PC-9 (cell line): ENCODE measurements at regions of chr10 and their contacts with region 1.

Region 1: GRCh38 chr10:3740157-3740871 is 44.7 kb downstream of the KLF6 start:
- DNase-seq: peak in 1 of 2 experiments; percentile 97
- H3K4me3 ChIP-seq: peak overlapping the region; percentile 24; the same call in 1 of the 2 replicates
- H3K27ac ChIP-seq: peak overlapping the region; percentile 96
- H3K4me1 ChIP-seq: peaks cover 40% of the 10 kb centered on the region
- H3K27me3 ChIP-seq: no peaks in the 10 kb centered on the region
- CTCF ChIP-seq: no peak

Region 2: DNA sequence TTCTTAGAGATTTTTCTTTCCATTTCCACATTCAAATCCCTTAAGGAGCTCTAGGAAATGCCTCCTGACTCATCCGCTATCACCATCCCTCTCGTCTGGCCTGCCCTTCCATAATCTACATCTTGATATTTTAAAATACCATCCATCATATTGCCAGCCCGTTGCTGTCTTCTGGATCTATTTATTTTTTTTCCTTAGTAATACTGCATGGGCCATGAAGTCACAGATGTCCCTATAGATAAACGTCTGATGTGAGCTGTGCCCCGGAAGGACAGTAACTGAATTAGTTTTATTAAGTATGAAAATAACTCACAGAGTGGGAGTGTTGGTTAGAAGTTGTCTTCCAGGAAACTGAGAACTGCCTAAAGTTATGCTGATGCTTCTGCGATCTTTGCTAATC is 31.5 kb before region 1 on chr10:
- CTCF ChIA-PET with region 1: no interaction called
- POLR2A ChIA-PET with region 1: interaction called, 11 read pairs
- intact Hi-C with region 1: no loop called
- DNase-seq: no peak
- H3K4me3 ChIP-seq: no peak overlapping the region
- H3K27ac ChIP-seq: no peak overlapping the region
- H3K4me1 ChIP-seq: no peaks in the 10 kb centered on the region
- H3K27me3 ChIP-seq: no peaks in the 10 kb centered on the region
- CTCF ChIP-seq: no peak

Region 3: GRCh38 chr10:3729397-3729976 is 10.8 kb before region 1 on chr10:
- CTCF ChIA-PET with region 1: interaction called, 10 read pairs
- POLR2A ChIA-PET with region 1: no interaction called
- intact Hi-C with region 1: no loop called
- DNase-seq: peak; percentile 39 to 78
- H3K4me3 ChIP-seq: no peak overlapping the region
- H3K27ac ChIP-seq: 0 out of 2 replicates have a peak overlapping the region, but pooled peaks have one; percentile 1
- H3K4me1 ChIP-seq: peaks cover 21% of the 10 kb centered on the region
- H3K27me3 ChIP-seq: no peaks in the 10 kb centered on the region
- CTCF ChIP-seq: no peak

Region 4: GRCh38 chr10:5297466-5297865 is 1557.2 kb after region 1 on chr10:
- CTCF ChIA-PET with region 1: no interaction called
- POLR2A ChIA-PET with region 1: no interaction called
- intact Hi-C with region 1: no loop called
- DNase-seq: no peak
- H3K4me3 ChIP-seq: no peak overlapping the region
- H3K27ac ChIP-seq: no peak overlapping the region
- H3K4me1 ChIP-seq: peaks cover under 1% of the 10 kb centered on the region
- H3K27me3 ChIP-seq: no peaks in the 10 kb centered on the region
- CTCF ChIP-seq: no peak